ENCODE measurements at regions of chr1 and their contacts with region 1.

Region 1: GRCh38 chr1:161382214-161383019 is 14.7 kb upstream of the CFAP126 start:
- DNase-seq: no peak
- H3K4me3 ChIP-seq: no peak overlapping the region
- H3K27ac ChIP-seq: peak overlapping the region; percentile 34
- H3K27me3 ChIP-seq: no peaks in the 10 kb centered on the region
- CTCF ChIP-seq: peak; percentile 65

Region 2: DNA sequence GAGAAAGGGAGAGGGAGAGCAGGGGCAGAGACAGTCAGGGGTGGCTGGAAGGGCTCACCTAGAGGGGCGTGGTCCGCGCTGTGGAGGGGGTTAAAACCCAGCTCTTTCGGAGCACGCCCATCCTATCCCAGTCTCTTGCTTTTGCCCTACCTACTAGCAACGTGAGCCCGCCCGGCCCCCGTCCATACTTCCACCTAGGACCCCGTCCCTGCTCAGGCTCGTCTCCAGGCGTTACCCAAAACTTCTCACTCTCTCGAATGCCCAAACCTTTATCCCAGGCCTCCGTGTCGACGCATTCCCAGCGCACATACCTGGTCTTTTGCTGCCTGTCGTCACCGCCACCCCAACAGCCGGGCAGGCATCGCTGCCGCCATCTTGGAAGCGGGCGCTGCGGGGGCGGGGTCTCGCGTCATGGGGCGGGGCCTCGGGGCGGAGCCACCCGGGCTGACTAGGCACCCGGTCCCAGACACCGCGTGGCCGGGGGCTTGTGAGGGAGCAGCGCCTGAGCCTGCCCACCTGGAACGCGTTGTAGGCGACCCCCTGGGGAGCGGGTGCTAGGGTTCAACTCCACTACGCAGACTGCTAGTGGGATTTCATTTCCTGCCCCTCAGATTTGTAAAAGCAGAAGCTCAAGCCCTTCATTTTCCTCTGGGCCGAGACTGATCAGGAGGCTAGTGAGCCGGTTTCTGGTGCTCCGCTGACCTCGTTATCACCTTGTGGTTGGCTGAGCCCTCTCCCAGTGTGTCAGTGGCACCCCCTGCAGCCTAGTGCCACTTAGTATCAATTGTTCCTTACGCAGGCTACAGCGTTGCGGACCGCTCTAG is 205.1 kb before region 1 on chr1 and contains the start of gene B4GALT3:
- CTCF ChIA-PET with region 1: interaction called, 10 read pairs
- POLR2A ChIA-PET with region 1: no interaction called
- DNase-seq: no peak
- H3K4me3 ChIP-seq: peak within 1 kb of the TSS; percentile 98
- H3K27ac ChIP-seq: peak within 1 kb of the TSS; percentile 47
- H3K27me3 ChIP-seq: no peaks in the 10 kb centered on the region
- CTCF ChIP-seq: no peak
- polyA plus RNA-seq, gene B4GALT3: 21.8 and 24.7 TPM in 2 replicates

Region 3: DNA sequence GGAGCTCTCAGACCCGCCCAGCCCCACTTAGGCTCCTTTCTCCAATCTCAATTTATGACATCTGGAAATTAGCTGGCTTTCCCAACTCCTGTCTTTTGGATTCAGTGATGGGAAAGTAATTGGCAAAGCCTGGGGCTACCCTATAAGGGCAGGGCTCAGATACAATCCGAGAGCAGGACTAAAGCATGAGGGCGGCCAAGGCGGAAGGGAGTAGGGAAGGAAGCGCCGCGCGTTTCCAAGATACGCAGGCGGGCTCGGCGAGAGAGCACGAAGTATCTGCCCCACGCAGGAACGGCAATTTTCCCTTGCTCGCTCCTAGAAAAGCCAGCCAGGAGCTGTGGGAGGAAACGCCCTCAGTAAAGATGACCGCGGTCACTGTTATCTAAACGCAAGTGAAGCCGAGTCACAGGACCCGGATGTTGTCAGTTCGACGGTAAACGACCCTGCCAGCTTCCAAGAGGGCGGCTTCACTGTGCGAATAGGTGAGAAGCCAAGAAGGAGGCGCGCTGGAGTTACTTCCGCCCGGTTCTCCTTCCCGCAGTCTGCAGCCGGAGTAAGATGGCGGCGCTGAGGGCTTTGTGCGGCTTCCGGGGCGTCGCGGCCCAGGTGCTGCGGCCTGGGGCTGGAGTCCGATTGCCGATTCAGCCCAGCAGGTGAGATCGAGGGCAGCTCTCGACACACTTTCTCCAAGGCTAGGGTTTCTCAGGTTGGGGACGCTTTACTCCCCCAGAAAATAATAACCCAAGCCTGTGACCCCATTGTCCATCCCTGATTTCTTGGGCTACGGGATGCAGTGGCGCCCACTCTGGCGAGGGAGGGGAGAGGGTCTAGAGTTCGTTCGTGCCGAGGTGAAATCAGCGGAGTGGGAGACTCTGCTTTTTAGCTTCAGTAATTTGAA is 180.3 kb before region 1 on chr1 and contains the start of gene NDUFS2:
- CTCF ChIA-PET with region 1: interaction called, 29 read pairs
- POLR2A ChIA-PET with region 1: no interaction called
- DNase-seq: peak; percentile 98
- H3K4me3 ChIP-seq: peak within 1 kb of the TSS; percentile 96
- H3K27ac ChIP-seq: peak within 1 kb of the TSS; percentile 99
- H3K27me3 ChIP-seq: no peaks in the 10 kb centered on the region
- CTCF ChIP-seq: peak; percentile 23
- polyA plus RNA-seq, gene NDUFS2: 150 and 155 TPM in 2 replicates

Region 4: GRCh38 chr1:161216945-161217712 is 165.3 kb before region 1 on chr1:
- CTCF ChIA-PET with region 1: interaction called, 19 read pairs
- POLR2A ChIA-PET with region 1: no interaction called
- DNase-seq: no peak
- H3K4me3 ChIP-seq: no peak overlapping the region
- H3K27ac ChIP-seq: peak overlapping the region; percentile 69
- H3K27me3 ChIP-seq: no peaks in the 10 kb centered on the region
- CTCF ChIP-seq: no peak

Region 5: DNA sequence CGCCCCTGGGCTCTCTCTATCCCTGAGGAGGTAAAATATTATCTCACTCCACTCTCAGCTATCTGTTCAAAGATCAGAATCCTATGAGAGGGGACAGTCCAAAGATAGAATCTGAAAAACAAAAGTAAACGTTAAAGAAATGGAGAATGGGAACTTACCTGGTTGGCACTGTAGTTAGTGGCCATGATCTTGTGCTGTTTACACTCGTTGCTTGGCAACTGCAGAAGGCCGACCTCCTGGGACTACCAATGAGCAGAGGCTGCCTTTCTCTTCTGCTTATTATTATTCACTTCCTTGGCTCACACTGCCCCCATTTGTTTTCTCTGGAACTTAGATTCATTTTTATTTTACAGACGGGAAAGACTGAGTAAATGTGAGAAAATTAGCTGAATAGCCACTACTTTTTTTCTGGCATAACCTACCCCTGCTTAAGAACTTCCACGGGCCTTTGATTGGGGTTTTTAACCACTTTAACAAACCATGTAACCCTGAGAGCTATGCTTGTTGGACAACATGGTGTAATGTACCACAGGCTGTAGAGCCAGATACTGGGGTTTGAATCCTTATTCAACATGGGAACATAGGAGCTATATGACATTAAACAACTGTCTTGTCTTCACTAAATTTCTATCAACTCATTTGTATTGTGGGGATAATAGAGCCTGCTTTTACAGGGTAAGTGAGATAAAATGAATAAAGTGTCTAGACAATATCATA is 14.6 kb before region 1 on chr1 and contains the start of gene CFAP126:
- CTCF ChIA-PET with region 1: interaction called, 38 read pairs
- POLR2A ChIA-PET with region 1: no interaction called
- DNase-seq: no peak
- H3K4me3 ChIP-seq: no peak within 1 kb of the TSS
- H3K27ac ChIP-seq: no peak within 1 kb of the TSS
- H3K27me3 ChIP-seq: no peaks in the 10 kb centered on the region
- CTCF ChIP-seq: no peak
- polyA plus RNA-seq, gene CFAP126: not detected in 2 replicates

Region 6: GRCh38 chr1:161921990-161922389 is 539.6 kb after region 1 on chr1:
- CTCF ChIA-PET with region 1: no interaction called
- POLR2A ChIA-PET with region 1: no interaction called
- DNase-seq: no peak
- H3K4me3 ChIP-seq: no peak overlapping the region
- H3K27ac ChIP-seq: no peak overlapping the region
- H3K27me3 ChIP-seq: no peaks in the 10 kb centered on the region
- CTCF ChIP-seq: no peak

Measured in AG04450 (cell line).